IMR-90 (cell line): ENCODE measurements at regions of chr7 and their contacts with region 1.

Region 1: DNA sequence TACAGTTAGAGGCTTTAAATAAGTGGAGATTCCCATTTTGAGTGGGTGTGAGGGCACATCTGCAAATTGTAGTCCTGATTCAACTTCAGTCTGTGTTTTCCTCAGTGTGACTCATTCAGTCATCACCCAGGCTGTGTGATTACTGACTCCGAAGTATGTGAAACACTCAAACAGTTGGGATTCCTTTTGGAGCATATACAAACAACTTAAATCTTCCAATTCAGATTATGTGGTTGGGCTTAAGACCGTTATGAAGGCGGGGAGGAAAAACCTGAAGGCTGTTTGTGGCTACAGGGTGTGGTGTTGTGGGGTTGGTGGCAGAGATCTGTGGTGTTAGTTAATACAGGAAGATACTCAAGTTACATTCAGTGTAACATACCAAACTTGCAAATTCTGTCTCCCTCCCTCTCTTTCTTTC is 259.7 kb upstream of the FERD3L start:
- DNase-seq: peak; percentile 99
- ATAC-seq: peak; percentile 90
- H3K4me3 ChIP-seq: no peak overlapping the region
- H3K27ac ChIP-seq: peak overlapping the region; percentile 65; the same call in 1 of the 2 replicates
- H3K4me1 ChIP-seq: no peaks in the 10 kb centered on the region; the same call in 1 of the 2 replicates
- H3K27me3 ChIP-seq: no peaks in the 10 kb centered on the region
- CTCF ChIP-seq: no peak
- POLR2A ChIP-seq: no peak
- RAD21 ChIP-seq: no peak

Region 2: GRCh38 chr7:19213746-19214145 is 191.2 kb before region 1 on chr7:
- CTCF ChIA-PET with region 1: no interaction called
- POLR2A ChIA-PET with region 1: no interaction called
- dilution Hi-C with region 1: no loop called
- in situ Hi-C with region 1: no loop called
- intact Hi-C with region 1: loop called (anchors 5 kb)
- DNase-seq: no peak
- ATAC-seq: no peak
- H3K4me3 ChIP-seq: no peak overlapping the region
- H3K27ac ChIP-seq: no peak overlapping the region
- H3K4me1 ChIP-seq: no peaks in the 10 kb centered on the region; the same call in 1 of the 2 replicates
- H3K27me3 ChIP-seq: no peaks in the 10 kb centered on the region
- CTCF ChIP-seq: no peak
- POLR2A ChIP-seq: no peak
- RAD21 ChIP-seq: no peak